ENCODE measurements at regions of chr1 and their contacts with region 1.

Region 1: GRCh38 chr1:79304131-79304530 is 297.6 kb upstream of the ADGRL4 start:
- DNase-seq: no peak
- H3K4me3 ChIP-seq: no peak overlapping the region
- H3K27ac ChIP-seq: no peak overlapping the region
- H3K4me1 ChIP-seq: no peaks in the 10 kb centered on the region
- H3K27me3 ChIP-seq: no peaks in the 10 kb centered on the region
- CTCF ChIP-seq: no peak
- POLR2A ChIP-seq: no peak

Region 2: DNA sequence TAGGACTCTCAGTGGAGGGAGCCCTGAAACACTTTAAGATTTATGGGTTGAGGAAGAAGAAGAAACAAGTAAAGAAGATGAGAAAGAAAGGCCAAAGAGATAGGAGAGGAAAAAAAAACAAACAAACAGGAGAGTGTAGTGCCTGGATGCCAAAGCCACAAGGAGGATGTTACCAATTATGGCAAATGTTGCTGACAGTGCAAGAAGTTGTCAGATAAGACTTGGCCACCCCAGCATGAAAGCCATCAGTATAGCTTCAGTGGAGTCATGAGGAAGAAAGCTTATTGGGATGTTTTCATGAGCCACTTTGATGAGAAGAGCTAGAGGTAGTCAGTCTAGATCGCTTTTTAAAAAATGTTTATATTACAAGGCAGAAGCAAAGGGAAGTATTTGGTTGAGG is 82.6 kb after region 1 on chr1:
- intact Hi-C with region 1: loop called (anchors 2 kb)
- DNase-seq: no peak
- H3K4me3 ChIP-seq: no peak overlapping the region
- H3K27ac ChIP-seq: no peak overlapping the region
- H3K4me1 ChIP-seq: no peaks in the 10 kb centered on the region
- H3K27me3 ChIP-seq: no peaks in the 10 kb centered on the region
- CTCF ChIP-seq: no peak
- POLR2A ChIP-seq: no peak